ENCODE measurements at regions of chr3 and their contacts with region 1.

Region 1: DNA sequence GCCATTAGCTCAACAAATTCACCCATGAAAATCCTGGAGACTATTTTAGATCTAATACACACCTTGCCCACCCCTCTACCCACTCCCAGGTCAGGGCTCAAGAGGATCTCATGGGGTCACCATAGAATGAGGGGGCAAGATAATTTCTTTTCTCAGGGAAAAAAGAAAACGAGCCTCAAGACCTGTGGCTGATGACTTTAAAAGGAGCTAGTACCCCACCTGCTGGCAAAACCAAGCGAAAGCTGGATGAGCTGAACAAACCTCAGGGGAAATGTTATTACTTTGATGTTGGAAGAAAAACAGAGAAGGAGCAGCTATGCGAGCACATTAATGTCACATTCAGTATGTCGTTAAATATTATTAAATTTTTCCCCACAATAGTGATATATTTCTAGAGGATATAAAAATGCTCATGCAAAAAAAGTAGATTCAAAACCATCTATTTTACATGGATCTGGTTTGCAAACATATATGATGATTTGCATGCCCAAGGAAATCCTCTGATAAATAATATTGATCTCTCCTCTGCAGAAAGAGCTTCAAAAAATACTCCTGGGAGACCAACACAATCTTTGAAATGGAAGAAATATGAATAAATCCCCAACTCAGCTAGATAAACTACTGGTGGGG is 37.7 kb downstream of the PLD1 start:
- DNase-seq: peak; percentile 42 to 75 (median 60)
- ATAC-seq: peak; percentile 29 to 31
- H3K4me3 ChIP-seq: no peak overlapping the region
- H3K27ac ChIP-seq: no peak overlapping the region
- H3K4me1 ChIP-seq: peaks cover 5% of the 10 kb centered on the region
- H3K27me3 ChIP-seq: no peaks in the 10 kb centered on the region

Region 2: DNA sequence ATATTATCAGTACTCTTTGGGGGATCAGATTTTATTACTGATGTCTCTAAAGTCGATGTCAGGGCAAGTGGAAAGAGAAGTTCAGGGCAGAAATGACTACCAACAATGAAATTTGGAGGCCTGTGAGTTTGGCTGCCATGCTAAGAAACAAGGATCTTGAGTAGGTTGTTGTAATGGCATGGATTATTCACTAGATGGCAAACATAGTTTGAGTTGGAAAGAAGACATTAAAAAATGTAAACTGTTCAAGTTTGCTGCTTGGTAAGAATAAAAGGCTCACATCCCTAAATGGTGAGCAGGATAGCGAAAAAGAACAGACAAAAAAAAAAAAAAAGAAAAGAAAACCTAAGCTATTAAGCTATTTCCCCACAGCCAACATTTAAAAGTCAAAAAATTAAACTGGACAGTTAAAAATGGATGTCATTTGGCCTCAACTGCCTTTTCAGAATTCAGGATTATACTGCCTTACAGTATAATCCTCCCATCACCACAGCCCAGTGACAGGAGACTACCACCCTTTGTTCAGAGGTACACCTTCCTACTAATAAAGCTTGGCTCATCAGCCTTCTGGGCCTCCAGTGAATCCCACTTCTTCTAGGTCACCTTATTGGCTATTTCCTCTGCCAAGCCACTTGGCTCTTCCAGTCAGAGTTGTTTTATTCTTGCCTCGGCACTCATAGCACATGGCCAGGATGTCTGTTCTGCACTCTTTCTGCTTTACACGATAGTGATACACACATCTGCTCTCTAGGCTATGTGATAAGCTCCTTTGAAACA is 126.0 kb before region 1 on chr3:
- intact Hi-C with region 1: loop called (anchors 2 to 10 kb)
- DNase-seq: no peak
- ATAC-seq: peak; percentile 64 to 74
- H3K4me3 ChIP-seq: no peak overlapping the region
- H3K27ac ChIP-seq: peak overlapping the region; percentile 67
- H3K4me1 ChIP-seq: peaks cover 10% of the 10 kb centered on the region
- H3K27me3 ChIP-seq: no peaks in the 10 kb centered on the region

Region 3: DNA sequence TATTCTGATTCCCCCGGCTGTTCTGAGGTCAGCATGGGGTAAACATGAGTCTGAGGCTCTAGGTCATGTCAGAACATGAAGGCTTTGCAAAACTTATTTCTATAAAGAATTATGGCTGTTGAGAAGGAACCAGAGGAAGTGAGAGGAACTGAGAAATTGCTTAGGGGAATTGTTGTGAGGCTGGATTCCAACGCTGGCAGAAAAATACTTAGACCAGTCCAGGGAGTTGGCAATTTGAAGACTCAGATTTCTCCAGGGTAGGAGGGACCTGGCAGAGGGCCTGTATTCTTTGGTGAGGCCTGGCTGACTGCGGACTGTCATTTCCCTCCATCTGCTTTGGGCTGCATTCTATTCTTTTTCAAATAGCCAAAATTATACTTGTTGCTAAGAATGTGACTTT is 117.7 kb before region 1 on chr3:
- intact Hi-C with region 1: loop called in 3 of 4 experiments (anchors 2 to 10 kb)
- DNase-seq: peak; percentile 78 to 90 (median 81)
- ATAC-seq: peak; percentile 89 to 94
- H3K4me3 ChIP-seq: no peak overlapping the region
- H3K27ac ChIP-seq: peak overlapping the region; percentile 72
- H3K4me1 ChIP-seq: peaks cover 7% of the 10 kb centered on the region
- H3K27me3 ChIP-seq: no peaks in the 10 kb centered on the region

Region 4: GRCh38 chr3:171660188-171660587 is 112.4 kb before region 1 on chr3:
- intact Hi-C with region 1: loop called in 2 of 4 experiments (anchors 10 kb)
- DNase-seq: no peak
- ATAC-seq: no peak
- H3K4me3 ChIP-seq: no peak overlapping the region
- H3K27ac ChIP-seq: no peak overlapping the region
- H3K4me1 ChIP-seq: no peaks in the 10 kb centered on the region
- H3K27me3 ChIP-seq: no peaks in the 10 kb centered on the region

Region 5: GRCh38 chr3:171685116-171685895 is 87.2 kb before region 1 on chr3:
- intact Hi-C with region 1: loop called in 1 of 4 experiments (anchors 10 kb)
- DNase-seq: no peak
- ATAC-seq: no peak
- H3K4me3 ChIP-seq: no peak overlapping the region
- H3K27ac ChIP-seq: no peak overlapping the region
- H3K4me1 ChIP-seq: peaks cover 5% of the 10 kb centered on the region
- H3K27me3 ChIP-seq: no peaks in the 10 kb centered on the region

Region 6: DNA sequence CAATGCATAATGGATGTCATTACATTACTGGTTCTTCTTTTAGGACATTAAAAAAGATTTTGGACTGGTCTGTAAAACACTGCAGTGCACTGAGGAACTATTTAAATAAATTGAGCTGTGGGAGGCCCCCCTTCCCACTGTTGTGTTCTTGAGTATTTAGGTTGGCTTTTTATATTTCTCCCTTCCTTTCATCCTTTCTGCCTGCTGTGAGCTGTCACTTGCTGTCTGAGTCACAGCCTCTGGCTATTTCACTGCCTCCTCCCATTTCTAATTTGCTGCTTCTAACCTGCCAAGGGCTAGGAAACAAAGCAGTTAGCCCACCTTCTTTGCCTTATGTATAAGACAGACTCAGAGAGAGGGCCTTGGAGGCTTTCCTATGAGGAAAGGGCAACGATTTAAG is 177.8 kb after region 1 on chr3:
- intact Hi-C with region 1: no loop called
- DNase-seq: no peak
- ATAC-seq: no peak
- H3K4me3 ChIP-seq: no peak overlapping the region
- H3K27ac ChIP-seq: no peak overlapping the region
- H3K4me1 ChIP-seq: no peaks in the 10 kb centered on the region
- H3K27me3 ChIP-seq: no peaks in the 10 kb centered on the region

Measured in right cardiac atrium (tissue), 5 donors.